Mammary epithelial cell (primary cell): ENCODE measurements at regions of chr2 and their contacts with region 1.

Region 1: GRCh38 chr2:191521608-191522208 is 156.2 kb upstream of the NABP1 start:
- DNase-seq: peak; percentile 18
- H3K4me3 ChIP-seq: no peak overlapping the region
- H3K27ac ChIP-seq: no peak overlapping the region
- H3K4me1 ChIP-seq: no peaks in the 10 kb centered on the region
- H3K27me3 ChIP-seq: no peaks in the 10 kb centered on the region
- CTCF ChIP-seq: peak; percentile 83 to 85

Region 2: DNA sequence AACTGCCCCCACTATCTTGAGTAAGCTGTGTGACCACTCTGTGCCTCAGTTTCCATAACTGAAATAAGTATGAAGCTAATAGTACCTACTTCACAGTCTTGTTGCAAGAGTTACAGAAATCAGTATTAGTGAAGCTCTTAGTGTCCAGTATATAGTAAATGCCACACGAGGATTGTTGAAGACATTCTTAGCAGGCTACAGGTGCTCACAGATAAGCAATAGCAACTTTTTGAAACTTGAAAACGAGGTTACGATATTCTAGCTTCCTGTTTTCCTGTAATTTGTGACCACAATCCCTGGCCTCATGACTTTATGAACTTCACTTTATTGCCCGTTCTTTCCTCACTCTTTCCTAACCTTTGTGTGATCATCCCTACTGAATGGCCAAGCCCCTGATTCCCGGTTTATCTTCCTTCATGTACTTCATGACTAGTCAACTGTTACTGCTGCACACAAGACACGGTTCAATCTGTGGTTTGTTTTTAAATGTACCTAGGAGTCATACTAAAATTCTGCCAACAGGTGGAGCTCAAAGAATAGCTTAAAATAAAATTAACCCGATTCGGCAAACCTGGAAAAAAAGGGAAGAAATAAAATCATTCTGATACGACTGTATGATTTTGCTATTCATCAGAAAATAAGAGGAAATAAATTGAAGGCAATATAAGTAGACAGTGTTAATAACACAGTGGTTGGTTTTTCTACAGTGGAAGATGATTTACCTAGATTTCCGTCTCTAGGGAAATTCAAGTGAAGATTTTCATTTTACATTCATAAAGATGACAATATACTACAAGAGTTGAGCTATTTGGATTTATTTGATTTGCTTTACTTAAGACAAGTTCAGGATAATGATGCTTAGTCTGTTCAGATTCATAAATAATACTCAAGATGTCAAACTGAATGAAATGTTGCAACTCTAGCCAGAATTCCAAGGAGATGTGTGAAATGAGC is 469.6 kb before region 1 on chr2:
- CTCF ChIA-PET with region 1: interaction called, 5 read pairs
- dilution Hi-C with region 1: no loop called
- in situ Hi-C with region 1: loop called in 1 of 2 experiments (anchors 25 kb)
- intact Hi-C with region 1: loop called (anchors 1 kb)
- DNase-seq: peak; percentile 35
- H3K4me3 ChIP-seq: no peak overlapping the region
- H3K27ac ChIP-seq: no peak overlapping the region
- H3K4me1 ChIP-seq: no peaks in the 10 kb centered on the region
- H3K27me3 ChIP-seq: no peaks in the 10 kb centered on the region
- CTCF ChIP-seq: peak; percentile 54 to 60

Region 3: DNA sequence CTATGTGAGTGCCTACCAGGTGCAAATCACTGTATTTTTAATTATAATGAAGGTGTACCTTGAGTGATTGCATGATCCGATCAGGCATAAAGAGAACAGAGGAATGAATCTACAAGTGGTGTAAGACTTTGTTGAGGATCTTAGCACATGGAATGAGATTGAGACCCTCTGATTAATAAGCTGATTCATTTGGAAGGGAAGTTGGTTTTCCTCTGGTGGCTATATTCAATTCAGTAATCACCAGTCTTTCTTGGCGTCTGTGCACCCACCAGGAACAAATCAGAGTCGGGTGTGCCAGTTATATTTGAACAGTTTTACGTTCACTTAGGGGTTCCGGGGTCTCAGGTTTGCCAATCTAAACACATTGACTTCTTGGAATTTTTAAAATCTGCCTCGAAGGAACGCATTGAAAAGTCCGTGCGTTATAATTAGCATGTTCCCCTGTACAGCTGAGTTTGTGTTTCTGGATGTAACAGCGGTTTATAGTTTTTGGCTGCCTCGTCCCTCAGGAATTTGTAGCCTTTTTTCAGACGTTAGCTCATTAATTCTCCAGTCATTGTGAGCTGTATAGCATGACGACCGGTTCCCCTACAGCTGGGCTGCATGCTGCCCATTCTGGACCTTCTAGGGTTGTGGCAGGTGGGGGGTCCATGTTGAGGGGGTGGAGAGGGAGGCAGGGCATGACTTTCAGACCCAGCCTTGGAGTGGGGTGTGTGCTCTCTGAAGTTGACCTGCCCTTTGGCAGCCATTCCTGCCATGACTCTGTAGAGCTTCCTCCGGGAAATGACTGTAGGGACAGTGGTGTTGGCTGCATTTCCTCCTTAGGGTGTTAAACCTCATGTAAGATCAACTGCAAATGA is 256.2 kb before region 1 on chr2:
- CTCF ChIA-PET with region 1: no interaction called
- dilution Hi-C with region 1: loop called (anchors 25 kb)
- in situ Hi-C with region 1: no loop called
- intact Hi-C with region 1: no loop called
- DNase-seq: no peak
- H3K4me3 ChIP-seq: no peak overlapping the region
- H3K27ac ChIP-seq: no peak overlapping the region
- H3K4me1 ChIP-seq: peaks cover 33% of the 10 kb centered on the region
- H3K27me3 ChIP-seq: no peaks in the 10 kb centered on the region
- CTCF ChIP-seq: no peak

Region 4: DNA sequence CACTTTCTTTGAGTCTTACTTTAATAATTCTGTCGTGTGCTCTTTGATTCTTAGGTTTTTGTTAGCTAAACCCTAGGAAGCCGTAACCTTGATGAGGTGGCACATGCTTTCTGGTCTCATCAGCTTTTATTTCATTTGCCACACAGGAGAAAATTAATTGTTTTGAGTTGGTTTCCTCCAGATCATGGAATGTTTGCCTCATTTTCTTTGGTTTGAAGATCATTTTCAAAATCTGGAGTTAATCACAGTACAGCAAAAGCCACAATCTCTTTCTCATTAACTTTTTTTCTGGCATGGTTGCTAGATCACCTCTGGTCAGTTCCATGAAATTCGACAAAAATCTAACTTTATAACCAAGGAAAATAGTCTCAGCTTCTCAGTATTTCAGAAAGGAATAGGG is 93.6 kb before region 1 on chr2:
- CTCF ChIA-PET with region 1: no interaction called
- dilution Hi-C with region 1: no loop called
- in situ Hi-C with region 1: no loop called
- intact Hi-C with region 1: no loop called
- DNase-seq: no peak
- H3K4me3 ChIP-seq: no peak overlapping the region
- H3K27ac ChIP-seq: no peak overlapping the region
- H3K4me1 ChIP-seq: no peaks in the 10 kb centered on the region
- H3K27me3 ChIP-seq: no peaks in the 10 kb centered on the region
- CTCF ChIP-seq: no peak

Region 5: DNA sequence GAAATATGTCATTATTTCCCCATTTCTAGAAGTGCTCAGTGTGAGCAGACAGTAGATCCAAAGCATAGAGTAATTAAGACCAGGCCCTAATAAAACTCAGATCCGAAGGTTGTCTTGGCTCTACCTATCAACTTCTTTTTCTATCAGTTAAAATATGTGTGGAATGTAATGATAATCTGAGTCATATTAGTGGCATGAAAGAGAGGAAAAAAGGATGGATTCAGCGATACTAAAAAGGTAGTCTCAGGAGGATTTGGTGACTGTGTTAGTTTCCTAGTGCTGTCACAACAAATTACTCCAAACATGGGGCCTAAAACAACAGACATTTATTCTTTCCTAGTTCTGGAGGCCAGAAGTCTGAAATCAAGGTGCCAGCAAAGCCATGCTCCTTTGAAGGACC is 52.5 kb after region 1 on chr2:
- CTCF ChIA-PET with region 1: no interaction called
- dilution Hi-C with region 1: no loop called
- in situ Hi-C with region 1: no loop called
- intact Hi-C with region 1: no loop called
- DNase-seq: no peak
- H3K4me3 ChIP-seq: no peak overlapping the region
- H3K27ac ChIP-seq: no peak overlapping the region
- H3K4me1 ChIP-seq: peaks cover 9% of the 10 kb centered on the region
- H3K27me3 ChIP-seq: no peaks in the 10 kb centered on the region
- CTCF ChIP-seq: no peak